ENCODE measurements at regions of chr3 and their contacts with region 1.

Region 1: DNA sequence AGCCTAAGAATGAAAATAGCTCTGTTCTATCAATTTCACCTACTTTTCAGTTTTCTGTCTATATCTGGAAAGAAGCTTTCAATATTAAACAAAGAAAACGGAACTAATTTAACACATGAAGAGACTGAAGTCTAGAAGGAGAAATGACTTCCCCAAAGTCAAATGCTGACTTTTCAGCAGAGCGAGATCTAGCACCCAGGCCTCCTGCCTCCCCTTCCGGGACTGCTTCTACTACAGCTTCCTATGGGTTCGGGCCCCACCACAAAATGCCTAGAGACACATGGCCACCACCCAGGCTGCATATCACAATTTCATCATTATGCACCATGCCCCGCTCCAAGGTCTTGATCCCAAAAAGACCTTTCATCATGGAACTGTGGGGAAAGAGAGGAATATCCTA is 104.5 kb downstream of the SST start:
- DNase-seq: no peak
- CTCF ChIP-seq: no peak

Region 2: DNA sequence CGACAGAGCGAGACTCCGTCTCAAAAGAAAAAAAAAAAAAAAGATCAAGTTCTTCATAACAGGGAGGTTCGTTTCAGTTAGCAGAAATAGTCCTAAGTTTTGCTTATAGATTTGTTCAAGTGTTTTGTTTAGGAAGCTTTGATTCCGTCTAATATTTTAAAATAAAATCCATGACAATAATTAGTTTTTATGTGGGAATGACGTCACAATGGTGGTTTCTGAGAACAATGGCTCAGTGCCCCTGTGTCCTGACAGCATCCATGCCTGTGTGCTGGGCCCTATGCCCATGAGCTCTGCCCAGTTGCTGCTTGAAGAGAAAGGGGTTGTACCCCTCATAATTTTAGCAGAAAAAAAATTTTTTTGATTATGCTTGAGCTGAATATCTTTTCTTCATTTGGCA is 29.5 kb before region 1 on chr3:
- CTCF ChIA-PET with region 1: no interaction called
- POLR2A ChIA-PET with region 1: no interaction called
- DNase-seq: no peak
- CTCF ChIP-seq: no peak

Region 3: GRCh38 chr3:187551416-187551815 is 14.3 kb before region 1 on chr3:
- CTCF ChIA-PET with region 1: interaction called, 11 read pairs
- POLR2A ChIA-PET with region 1: no interaction called
- DNase-seq: no peak
- CTCF ChIP-seq: no peak

Region 4: DNA sequence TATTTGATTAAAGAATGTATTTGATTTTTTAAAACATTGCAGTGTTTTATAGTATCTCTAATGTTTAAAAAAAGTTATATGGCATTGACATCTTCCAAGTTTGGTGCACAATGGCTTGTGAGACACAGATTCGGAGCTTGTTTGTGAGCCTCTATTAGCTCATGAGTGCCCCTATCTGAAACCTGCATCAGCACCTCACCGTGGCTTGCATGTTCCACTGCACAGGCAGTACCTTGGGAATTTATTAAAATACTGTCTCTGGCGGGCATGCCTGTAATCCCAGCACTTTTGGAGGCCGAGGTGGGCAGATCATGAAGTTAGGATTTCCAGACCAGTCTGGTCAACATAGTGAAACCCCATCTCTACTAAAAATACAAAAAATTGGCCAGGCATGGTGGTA is 143.5 kb after region 1 on chr3:
- CTCF ChIA-PET with region 1: no interaction called
- POLR2A ChIA-PET with region 1: no interaction called
- DNase-seq: no peak
- CTCF ChIP-seq: no peak